Testis (tissue), 5 donors: ENCODE measurements at regions of chr2 and their contacts with region 1.

Region 1: DNA sequence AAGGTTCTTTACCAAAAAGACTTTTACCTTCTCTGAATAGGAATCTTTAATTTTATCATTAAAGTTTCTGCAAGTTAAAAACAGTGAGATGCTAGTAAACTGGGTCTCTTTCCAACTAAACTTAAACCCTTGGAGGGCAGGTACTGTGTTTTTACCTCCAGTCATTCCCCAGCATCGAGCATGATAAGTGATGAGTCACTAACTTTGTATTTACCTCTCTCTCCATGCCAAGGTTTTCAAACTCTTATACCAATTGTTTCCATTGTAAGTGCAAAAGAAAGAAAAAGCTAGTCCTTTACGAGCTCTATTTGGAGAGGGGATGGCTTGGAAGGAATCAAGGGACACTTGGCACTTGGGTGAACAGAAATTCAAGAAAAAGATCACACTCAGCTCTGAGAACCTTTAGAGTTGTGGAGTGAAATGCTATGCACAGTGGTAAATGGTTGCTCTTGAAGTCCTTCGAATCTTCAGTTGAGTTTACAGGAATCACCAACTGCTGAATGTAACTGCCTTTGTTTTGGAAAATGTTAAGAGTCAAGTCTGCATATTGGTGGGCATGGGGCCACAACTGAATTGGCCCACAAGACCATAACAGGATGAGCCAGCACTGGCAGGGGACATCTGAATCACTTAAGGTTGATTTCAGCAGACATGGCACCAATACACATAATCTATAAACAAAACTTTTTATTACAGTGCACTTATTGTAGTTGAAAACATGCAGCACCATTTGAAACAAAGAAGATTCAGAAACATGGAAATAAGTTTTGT is 8.3 kb upstream of the RBM43 start:
- DNase-seq: no peak
- H3K4me3 ChIP-seq: no peak overlapping the region
- H3K27ac ChIP-seq: no peak overlapping the region
- H3K4me1 ChIP-seq: no peaks in the 10 kb centered on the region
- H3K27me3 ChIP-seq: no peaks in the 10 kb centered on the region
- CTCF ChIP-seq: no peak
- POLR2A ChIP-seq: no peak

Region 2: GRCh38 chr2:151409601-151410484 is 139.9 kb after region 1 on chr2 and contains the start of gene RIF1:
- intact Hi-C with region 1: loop called (anchors 10 kb)
- DNase-seq: peak; percentile 94
- H3K4me3 ChIP-seq: peak within 1 kb of the TSS; percentile 93 to 98
- H3K27ac ChIP-seq: peak within 1 kb of the TSS; percentile 96 to 99
- H3K4me1 ChIP-seq: no peaks in the 10 kb centered on the region
- H3K27me3 ChIP-seq: no peaks in the 10 kb centered on the region
- CTCF ChIP-seq: peak; percentile 53 to 69 (median 54)
- POLR2A ChIP-seq: no peak
- total RNA-seq, gene RIF1: 66.3 to 81.7 TPM